Aorta (tissue), 5 donors: ENCODE measurements at regions of chr1 and their contacts with region 1.

Region 1: GRCh38 chr1:3012456-3013291 is 8.6 kb upstream of the ACTRT2 start:
- DNase-seq: peak; percentile 68 to 92
- ATAC-seq: peak; percentile 83
- H3K4me3 ChIP-seq: no peak overlapping the region
- H3K27ac ChIP-seq: no peak overlapping the region
- H3K4me1 ChIP-seq: no peaks in the 10 kb centered on the region
- H3K27me3 ChIP-seq: no peaks in the 10 kb centered on the region

Region 2: DNA sequence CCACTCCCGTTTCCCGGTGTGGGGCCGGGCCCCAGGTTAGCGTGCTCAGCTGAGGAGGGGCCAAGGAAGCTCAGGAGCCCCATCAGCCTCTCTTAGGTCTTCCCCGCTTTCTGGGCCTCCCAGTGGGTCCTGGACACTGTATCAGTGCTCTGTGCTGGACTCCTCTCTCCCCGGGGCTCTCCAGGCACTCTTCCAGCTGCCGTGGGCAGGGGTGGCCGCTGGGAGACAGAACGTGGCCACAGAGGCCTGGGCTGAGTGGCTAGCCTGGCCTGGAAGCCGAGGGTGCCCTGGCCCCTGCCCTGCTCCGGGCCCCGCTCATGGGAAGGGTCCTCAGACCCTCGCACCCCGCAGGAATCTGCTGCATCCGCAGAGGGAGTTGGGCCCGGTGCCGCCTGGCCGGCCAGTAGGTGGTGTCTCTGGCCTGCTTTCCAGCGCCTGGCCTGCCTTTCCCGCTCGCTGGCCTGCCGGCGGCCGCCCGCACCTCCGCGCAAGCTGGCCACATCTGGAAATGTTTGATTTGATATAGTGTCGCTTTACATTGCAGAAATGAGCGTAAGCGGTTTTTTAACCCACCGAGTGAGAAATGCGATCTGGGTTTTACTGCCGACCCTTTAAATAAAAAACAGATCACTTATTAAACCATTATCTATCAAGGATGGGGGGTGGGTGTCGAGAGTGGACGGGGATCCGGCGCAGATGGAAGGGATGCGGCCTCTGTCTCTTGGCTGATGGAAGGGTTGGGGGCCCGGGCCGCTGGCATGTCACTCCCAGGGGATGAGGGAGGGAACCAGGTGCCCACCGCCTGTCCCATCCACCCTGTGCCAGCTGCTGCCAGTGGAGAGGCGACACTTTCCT is 136.7 kb before region 1 on chr1:
- intact Hi-C with region 1: loop called in 1 of 2 experiments (anchors 5 kb)
- DNase-seq: peak; percentile 62 to 86
- ATAC-seq: peak; percentile 62
- H3K4me3 ChIP-seq: no peak overlapping the region
- H3K27ac ChIP-seq: no peak overlapping the region
- H3K4me1 ChIP-seq: no peaks in the 10 kb centered on the region
- H3K27me3 ChIP-seq: no peaks in the 10 kb centered on the region

Region 3: GRCh38 chr1:3054474-3054873 is 41.8 kb after region 1 on chr1:
- intact Hi-C with region 1: loop called in 1 of 2 experiments (anchors 5 kb)
- DNase-seq: peak in 1 of 2 donors; percentile 57
- ATAC-seq: no peak
- H3K4me3 ChIP-seq: no peak overlapping the region
- H3K27ac ChIP-seq: no peak overlapping the region
- H3K4me1 ChIP-seq: no peaks in the 10 kb centered on the region
- H3K27me3 ChIP-seq: no peaks in the 10 kb centered on the region

Region 4: GRCh38 chr1:3126756-3127597 is 114.3 kb after region 1 on chr1:
- intact Hi-C with region 1: no loop called
- DNase-seq: no peak
- ATAC-seq: peak; percentile 46
- H3K4me3 ChIP-seq: no peak overlapping the region
- H3K27ac ChIP-seq: peak overlapping the region; percentile 91 to 98
- H3K4me1 ChIP-seq: no peaks in the 10 kb centered on the region
- H3K27me3 ChIP-seq: no peaks in the 10 kb centered on the region

Region 5: DNA sequence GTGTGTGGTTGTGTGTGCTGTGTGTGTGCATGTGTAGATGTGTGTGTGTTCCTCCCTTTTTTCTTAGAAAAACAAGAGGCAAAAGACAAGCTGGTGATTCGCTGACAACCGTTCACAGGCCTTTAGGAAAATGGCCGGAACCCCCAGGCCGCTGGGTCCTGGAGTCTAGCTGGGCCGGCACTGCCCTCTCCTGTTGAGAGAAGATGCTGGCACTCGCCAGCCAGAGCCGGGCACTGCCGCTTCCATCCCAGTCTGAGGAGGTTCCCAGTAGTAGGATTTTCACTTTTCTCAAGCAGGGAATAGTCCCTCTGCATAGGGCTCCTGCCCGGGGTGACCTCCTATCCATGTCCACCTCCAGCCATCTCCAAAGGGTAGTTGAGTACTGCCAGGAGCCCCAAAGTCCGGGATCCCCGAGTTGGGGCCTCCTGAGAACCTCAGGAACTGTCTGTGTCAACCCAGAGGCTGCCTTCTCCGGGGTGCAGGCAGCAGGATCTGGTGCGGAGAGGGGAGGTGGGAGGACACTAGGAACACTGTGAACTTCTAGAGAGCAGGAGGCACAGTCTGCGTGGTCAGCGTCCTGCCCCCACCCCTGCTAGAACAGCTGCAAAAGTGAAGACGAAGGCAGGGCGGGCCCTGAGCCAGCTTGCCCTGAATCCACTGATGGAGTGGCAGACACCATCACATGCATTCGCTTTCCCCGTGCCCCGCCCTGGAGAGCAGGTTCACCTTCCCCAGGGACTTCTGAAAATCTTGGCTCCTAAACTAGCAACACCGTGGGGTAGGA is 397.7 kb after region 1 on chr1:
- intact Hi-C with region 1: loop called in 1 of 2 experiments (anchors 5 kb)
- DNase-seq: peak; percentile 83 to 91
- ATAC-seq: peak; percentile 82
- H3K4me3 ChIP-seq: no peak overlapping the region
- H3K27ac ChIP-seq: no peak overlapping the region
- H3K4me1 ChIP-seq: no peaks in the 10 kb centered on the region
- H3K27me3 ChIP-seq: no peaks in the 10 kb centered on the region

Region 6: DNA sequence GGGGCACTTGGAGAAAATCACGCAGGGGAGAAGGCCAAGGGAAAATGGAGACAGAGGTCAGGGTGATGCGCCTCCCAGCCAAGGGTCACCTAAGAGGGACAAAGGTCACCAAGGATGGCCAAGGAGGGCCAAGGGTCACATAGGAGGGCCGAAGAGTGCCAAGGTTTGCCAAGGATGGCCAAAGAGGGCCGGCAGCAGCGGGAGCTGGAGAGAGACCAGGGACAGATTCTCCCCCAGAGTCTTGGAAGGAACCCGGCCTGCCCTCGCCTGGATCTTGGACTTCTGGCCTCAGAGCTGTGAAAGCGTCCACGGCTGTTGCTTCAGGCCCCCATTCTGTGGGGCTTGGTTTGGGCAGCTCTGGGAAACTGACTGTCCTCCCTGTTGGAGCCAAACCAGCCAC is 416.2 kb after region 1 on chr1:
- intact Hi-C with region 1: loop called in 1 of 2 experiments (anchors 5 kb)
- DNase-seq: peak in 1 of 2 donors; percentile 42
- ATAC-seq: no peak
- H3K4me3 ChIP-seq: no peak overlapping the region
- H3K27ac ChIP-seq: no peak overlapping the region
- H3K4me1 ChIP-seq: no peaks in the 10 kb centered on the region
- H3K27me3 ChIP-seq: no peaks in the 10 kb centered on the region